ENCODE measurements at regions of chr14 and their contacts with region 1.

Region 1: DNA sequence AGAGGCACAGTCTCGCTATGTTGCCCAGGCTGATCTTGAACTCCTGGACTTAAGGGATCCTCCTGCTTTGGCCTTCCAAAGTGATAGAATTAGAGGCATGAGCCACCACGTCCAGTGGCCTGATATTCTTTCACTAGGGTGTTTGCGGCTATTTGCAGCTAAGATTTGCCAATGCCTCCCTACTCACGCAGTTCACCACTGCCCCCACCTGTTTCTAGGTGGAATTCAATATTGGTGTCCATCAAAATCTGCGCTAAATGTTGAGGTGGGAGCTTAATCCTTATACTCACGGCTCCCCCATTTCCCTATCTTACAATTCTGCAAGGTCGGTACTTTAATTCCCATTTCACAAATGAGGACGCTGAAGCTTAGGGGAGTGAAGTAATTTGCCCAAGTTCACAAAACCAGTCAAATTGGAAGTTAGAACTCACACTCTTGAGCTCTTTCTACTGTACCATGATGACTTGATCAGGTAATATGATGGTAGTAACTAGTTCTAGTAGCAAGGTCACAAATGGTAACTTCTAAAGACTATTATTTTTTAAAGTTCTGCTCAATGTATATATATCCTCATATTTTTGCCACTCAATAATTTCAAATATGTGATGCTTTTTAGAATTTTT is 22.1 kb upstream of the LRRC9 start:
- H3K4me3 ChIP-seq: no peak overlapping the region
- H3K27ac ChIP-seq: no peak overlapping the region
- H3K4me1 ChIP-seq: no peaks in the 10 kb centered on the region
- CTCF ChIP-seq: no peak; the same call in 1 of the 2 replicates

Region 2: DNA sequence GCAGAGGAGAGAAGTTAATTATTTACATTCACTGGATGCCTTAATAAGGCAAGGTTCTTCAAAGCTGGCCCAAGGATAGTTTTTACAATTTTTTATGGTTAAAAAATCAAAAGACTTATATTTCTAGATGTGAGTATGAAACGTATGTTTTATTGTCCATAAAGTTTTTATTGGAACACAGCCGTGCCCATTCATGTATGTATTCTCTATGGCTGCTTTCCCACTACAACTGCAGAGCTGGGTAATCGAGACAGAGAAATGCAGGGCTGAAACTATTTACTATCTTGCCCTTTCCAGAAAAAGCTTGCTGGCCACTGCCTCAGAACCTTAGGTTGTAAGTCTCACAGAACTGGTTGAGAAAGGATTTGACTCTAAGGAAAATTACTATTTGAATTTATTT is 397.1 kb before region 1 on chr14:
- CTCF ChIA-PET with region 1: interaction called, 11 read pairs
- POLR2A ChIA-PET with region 1: no interaction called
- H3K4me3 ChIP-seq: no peak overlapping the region
- H3K27ac ChIP-seq: no peak overlapping the region
- H3K4me1 ChIP-seq: no peaks in the 10 kb centered on the region
- CTCF ChIP-seq: no peak

Region 3: GRCh38 chr14:59507063-59507780 is 390.6 kb before region 1 on chr14:
- CTCF ChIA-PET with region 1: interaction called, 17 read pairs
- POLR2A ChIA-PET with region 1: interaction called, 4 read pairs
- H3K4me3 ChIP-seq: no peak overlapping the region
- H3K27ac ChIP-seq: no peak overlapping the region
- H3K4me1 ChIP-seq: no peaks in the 10 kb centered on the region; the same call in 1 of the 2 replicates
- CTCF ChIP-seq: 0 out of 2 replicates have a peak, but pooled peaks have one; percentile 50

Region 4: DNA sequence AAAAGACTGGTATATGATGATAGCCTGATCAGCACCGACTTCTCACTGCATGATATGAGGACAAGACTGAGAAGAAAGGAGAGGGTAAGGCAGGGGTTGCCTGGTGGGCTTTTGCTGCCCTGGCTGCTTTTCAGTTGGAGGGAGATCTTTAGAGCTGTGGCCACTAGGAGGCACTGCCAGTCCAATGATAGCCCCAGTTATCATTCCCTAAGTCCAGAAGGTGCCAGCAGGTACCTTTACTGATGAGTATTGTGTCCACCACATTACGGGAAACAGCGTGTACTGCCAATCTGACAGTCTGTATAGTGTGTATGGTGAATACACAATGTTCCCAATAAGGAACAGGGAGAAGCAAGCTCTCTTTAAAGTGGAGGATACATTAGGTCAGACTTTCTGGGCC is 265.5 kb before region 1 on chr14:
- CTCF ChIA-PET with region 1: interaction called, 39 read pairs
- POLR2A ChIA-PET with region 1: no interaction called
- H3K4me3 ChIP-seq: no peak overlapping the region
- H3K27ac ChIP-seq: no peak overlapping the region
- H3K4me1 ChIP-seq: peaks cover 11% of the 10 kb centered on the region
- CTCF ChIP-seq: no peak

Region 5: DNA sequence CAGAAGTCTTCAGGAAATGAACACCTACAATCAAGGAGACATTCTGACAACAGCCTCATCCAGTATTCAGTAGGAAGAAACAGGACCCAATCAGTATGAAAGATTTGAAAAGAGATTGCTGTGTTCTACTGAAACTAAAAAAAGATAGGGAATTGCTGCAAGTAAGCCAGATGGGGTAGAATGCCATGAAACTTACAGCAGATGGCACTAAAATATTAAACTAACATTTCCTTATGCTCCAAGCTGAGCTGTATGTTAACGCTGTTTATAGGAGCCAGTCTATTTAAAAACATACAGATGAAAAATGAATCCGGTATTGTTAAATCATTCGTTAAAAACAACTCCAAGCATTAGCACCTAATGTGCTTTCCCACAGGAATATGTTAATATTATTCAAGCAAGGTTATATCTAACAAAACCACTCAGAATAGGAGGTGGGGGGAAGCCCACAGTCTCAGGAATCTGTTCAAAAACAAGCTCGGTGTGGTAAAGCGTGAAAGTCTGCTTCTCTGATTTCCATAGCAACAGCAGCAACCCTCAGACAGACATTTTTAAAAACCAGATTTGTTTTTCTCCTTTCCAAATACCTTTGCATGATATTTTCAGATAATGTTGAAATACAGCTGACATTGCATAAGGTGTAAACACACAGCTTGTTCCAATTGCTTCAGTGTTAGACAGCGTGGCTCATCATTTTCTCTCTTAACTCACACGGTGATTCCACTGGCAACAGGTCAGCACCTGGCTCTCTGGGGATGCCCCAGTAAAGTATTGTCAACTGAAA is 189.9 kb before region 1 on chr14:
- CTCF ChIA-PET with region 1: interaction called, 26 read pairs
- POLR2A ChIA-PET with region 1: no interaction called
- H3K4me3 ChIP-seq: no peak overlapping the region
- H3K27ac ChIP-seq: no peak overlapping the region
- H3K4me1 ChIP-seq: no peaks in the 10 kb centered on the region
- CTCF ChIP-seq: no peak

Region 6: DNA sequence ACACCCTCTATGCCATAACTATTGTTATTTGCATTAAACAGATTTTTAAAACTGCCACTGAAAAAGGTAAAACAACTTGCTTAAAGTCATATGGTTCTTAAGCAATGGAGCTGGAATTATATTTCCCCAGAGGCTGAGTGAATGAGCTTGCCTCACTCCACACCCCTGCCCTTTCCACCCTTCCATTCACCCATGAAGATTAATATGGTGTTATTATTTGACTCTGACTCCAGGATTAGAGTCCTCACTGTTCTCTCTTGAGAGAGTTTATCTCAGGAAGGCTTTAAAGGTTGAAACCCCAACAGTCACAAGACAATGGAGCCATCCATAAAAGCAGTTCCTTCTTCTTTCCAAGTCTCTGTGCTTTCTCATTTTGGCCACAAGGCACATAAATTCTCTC is 112.2 kb before region 1 on chr14:
- CTCF ChIA-PET with region 1: no interaction called
- POLR2A ChIA-PET with region 1: no interaction called
- H3K4me3 ChIP-seq: no peak overlapping the region
- H3K27ac ChIP-seq: no peak overlapping the region
- H3K4me1 ChIP-seq: 0 out of 2 replicates have a peak, but pooled peaks cover 3% of the 10 kb centered on the region
- CTCF ChIP-seq: no peak

Region 7: DNA sequence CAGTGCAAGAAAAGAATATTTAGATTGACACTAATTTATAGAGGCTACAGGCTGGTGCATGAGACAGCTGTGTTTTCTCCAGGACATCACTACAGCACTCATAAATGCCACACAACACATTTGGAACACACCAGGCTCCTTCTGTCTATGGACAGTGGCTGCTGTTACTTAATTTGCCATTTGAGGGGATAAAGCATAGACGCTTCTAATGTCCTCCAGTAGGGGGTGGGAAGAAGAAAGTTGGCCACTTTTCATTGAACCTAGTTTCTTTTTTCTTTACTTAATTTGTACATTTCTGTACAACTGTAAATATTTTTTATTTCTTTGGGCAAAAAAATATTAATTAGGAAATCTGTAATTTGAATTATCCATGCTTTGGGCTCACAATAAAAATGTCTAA is 14.9 kb before region 1 on chr14:
- CTCF ChIA-PET with region 1: interaction called, 13 read pairs
- POLR2A ChIA-PET with region 1: no interaction called
- H3K4me3 ChIP-seq: no peak overlapping the region
- H3K27ac ChIP-seq: no peak overlapping the region
- H3K4me1 ChIP-seq: no peaks in the 10 kb centered on the region
- CTCF ChIP-seq: no peak

Region 8: DNA sequence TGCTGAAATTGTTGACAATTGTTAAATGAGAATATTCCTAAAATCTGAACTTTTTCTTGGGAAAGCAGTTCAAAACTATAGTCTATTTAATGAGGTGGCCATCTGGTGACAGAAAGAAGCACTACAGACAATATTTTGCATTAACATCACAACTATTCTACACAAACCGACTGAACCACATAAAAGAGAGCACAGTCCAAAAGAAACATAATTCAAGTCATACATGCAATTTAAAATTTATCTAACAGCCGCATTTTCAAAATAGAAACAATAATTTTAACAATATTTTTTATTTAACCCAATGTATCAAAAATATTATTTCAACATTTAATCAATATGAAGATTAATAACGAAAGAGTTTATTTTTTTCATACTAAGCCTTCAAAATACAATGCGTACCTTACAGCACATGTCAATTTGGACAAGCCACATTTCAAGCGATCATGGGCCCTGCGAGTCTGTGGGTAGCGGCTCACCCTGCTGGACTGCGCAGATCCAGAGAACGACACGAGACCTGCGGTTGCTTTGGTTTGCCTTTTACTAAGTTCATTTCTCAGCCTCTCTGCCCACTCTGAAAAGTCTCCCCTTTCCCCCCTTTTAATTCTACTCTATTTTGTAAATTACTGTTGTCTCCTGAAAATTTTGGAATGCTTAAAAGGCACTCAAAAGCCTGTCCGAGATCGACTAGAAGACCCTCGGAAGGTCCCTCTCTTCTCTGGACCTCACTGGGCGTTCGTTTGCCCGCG is 21.1 kb after region 1 on chr14:
- CTCF ChIA-PET with region 1: interaction called, 10 read pairs
- POLR2A ChIA-PET with region 1: no interaction called
- H3K4me3 ChIP-seq: peak overlapping the region; percentile 67
- H3K27ac ChIP-seq: peak overlapping the region; percentile 74; the same call in 1 of the 2 replicates
- H3K4me1 ChIP-seq: peaks cover 3% of the 10 kb centered on the region; the same call in 1 of the 2 replicates
- CTCF ChIP-seq: no peak

Region 9: DNA sequence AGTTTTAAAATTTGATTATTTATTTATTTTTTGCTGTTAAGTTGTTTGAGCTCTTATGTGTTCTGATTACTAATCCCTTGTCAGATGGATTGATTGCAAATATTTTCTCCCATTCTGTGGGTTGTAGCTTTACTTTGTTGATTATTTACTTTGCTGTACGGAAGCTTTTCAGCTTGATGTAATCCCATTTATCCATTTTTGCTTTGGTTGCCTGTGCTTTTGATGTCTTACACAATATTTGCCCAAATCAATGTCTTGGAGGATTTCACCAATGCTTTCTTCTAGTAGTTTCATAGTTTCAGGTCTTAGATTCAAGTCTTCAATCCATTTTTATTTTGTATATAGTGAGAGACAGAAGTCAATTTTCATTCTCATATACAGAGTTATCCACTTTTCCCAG is 137.3 kb after region 1 on chr14:
- CTCF ChIA-PET with region 1: no interaction called
- POLR2A ChIA-PET with region 1: no interaction called
- H3K4me3 ChIP-seq: no peak overlapping the region
- H3K27ac ChIP-seq: no peak overlapping the region
- H3K4me1 ChIP-seq: no peaks in the 10 kb centered on the region
- CTCF ChIP-seq: no peak

Measured in HEK293 (cell line).